H1 (cell line): ENCODE measurements at regions of chr4 and their contacts with region 1.

Region 1: GRCh38 chr4:126223784-126224407 is 909.1 kb downstream of the FAT4 start:
- DNase-seq: no peak
- H3K4me3 ChIP-seq: no peak overlapping the region
- H3K27ac ChIP-seq: no peak overlapping the region
- H3K4me1 ChIP-seq: no peaks in the 10 kb centered on the region
- H3K27me3 ChIP-seq: no peaks in the 10 kb centered on the region
- CTCF ChIP-seq: peak in 1 of 3 experiments; percentile 51; a peak in 2 of 4 replicates
- EP300 ChIP-seq: no peak
- POLR2A ChIP-seq: no peak
- RAD21 ChIP-seq: peak; percentile 33 to 34

Region 2: GRCh38 chr4:126202226-126202625 is 21.7 kb before region 1 on chr4:
- CTCF ChIA-PET with region 1: interaction called, 12 read pairs
- POLR2A ChIA-PET with region 1: no interaction called
- DNase-seq: no peak
- H3K4me3 ChIP-seq: no peak overlapping the region
- H3K27ac ChIP-seq: no peak overlapping the region
- H3K4me1 ChIP-seq: no peaks in the 10 kb centered on the region
- H3K27me3 ChIP-seq: no peaks in the 10 kb centered on the region
- CTCF ChIP-seq: no peak
- EP300 ChIP-seq: no peak
- POLR2A ChIP-seq: no peak
- RAD21 ChIP-seq: no peak